Activated CD4-positive, alpha-beta T cell treated with anti-CD3 and anti-CD28 coated beads, Interleukin-2, amount 10 ng/mL, durations not matched to agents 24 days and 14 days (primary cell): ENCODE measurements at regions of chr5 and their contacts with region 1.

Region 1: GRCh38 chr5:140251527-140251973 is 51.4 kb downstream of the PFDN1 start:
- DNase-seq: peak; percentile 91
- H3K4me3 Mint-ChIP-seq: peak overlapping the region; percentile 65
- H3K27ac Mint-ChIP-seq: peak overlapping the region; percentile 88
- H3K4me1 Mint-ChIP-seq: peaks cover 46% of the 10 kb centered on the region
- H3K27me3 Mint-ChIP-seq: no peaks in the 10 kb centered on the region

Region 2: DNA sequence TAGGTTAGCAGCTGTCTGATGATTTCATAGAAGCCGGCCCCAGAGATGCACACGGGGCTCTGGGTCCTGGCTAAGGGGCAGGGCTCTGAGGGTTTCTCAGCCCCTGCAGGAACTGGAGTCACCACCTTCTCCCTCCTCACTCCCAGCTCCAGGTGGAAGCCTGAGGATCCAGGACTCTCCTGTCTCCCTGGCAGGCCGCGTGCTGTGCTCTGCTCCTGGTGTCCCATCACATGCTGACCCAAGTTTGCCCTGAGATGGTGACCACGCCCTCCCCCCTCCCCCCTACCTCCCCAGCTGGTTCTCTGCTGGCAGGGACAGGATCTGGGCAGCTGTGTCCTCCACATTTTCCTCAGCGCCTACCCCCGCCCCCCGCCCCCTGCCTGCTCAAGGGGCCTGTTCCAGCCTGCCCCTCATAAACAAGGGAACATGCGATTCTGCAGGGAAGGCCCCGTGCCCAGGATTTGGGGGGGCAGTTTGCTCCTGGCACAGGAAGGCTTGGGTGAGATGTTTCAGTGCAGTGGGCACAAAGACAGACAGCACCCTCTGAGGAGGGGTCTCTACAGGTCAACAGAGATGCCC is 368.5 kb before region 1 on chr5:
- intact Hi-C with region 1: no loop called
- DNase-seq: no peak
- H3K4me3 Mint-ChIP-seq: no peak overlapping the region
- H3K27ac Mint-ChIP-seq: no peak overlapping the region
- H3K4me1 Mint-ChIP-seq: no peaks in the 10 kb centered on the region
- H3K27me3 Mint-ChIP-seq: peaks cover 5% of the 10 kb centered on the region

Region 3: GRCh38 chr5:140261403-140262171 is 10.0 kb after region 1 on chr5:
- intact Hi-C with region 1: loop called (anchors 1 kb)
- DNase-seq: peak; percentile 73
- H3K4me3 Mint-ChIP-seq: no peak overlapping the region
- H3K27ac Mint-ChIP-seq: peak overlapping the region; percentile 70
- H3K4me1 Mint-ChIP-seq: peaks cover 61% of the 10 kb centered on the region
- H3K27me3 Mint-ChIP-seq: no peaks in the 10 kb centered on the region

Region 4: GRCh38 chr5:140267559-140268018 is 16.0 kb after region 1 on chr5:
- intact Hi-C with region 1: loop called (anchors 1 kb)
- DNase-seq: no peak
- H3K4me3 Mint-ChIP-seq: peak overlapping the region; percentile 63
- H3K27ac Mint-ChIP-seq: peak overlapping the region; percentile 26
- H3K4me1 Mint-ChIP-seq: peaks cover 36% of the 10 kb centered on the region
- H3K27me3 Mint-ChIP-seq: no peaks in the 10 kb centered on the region

Region 5: DNA sequence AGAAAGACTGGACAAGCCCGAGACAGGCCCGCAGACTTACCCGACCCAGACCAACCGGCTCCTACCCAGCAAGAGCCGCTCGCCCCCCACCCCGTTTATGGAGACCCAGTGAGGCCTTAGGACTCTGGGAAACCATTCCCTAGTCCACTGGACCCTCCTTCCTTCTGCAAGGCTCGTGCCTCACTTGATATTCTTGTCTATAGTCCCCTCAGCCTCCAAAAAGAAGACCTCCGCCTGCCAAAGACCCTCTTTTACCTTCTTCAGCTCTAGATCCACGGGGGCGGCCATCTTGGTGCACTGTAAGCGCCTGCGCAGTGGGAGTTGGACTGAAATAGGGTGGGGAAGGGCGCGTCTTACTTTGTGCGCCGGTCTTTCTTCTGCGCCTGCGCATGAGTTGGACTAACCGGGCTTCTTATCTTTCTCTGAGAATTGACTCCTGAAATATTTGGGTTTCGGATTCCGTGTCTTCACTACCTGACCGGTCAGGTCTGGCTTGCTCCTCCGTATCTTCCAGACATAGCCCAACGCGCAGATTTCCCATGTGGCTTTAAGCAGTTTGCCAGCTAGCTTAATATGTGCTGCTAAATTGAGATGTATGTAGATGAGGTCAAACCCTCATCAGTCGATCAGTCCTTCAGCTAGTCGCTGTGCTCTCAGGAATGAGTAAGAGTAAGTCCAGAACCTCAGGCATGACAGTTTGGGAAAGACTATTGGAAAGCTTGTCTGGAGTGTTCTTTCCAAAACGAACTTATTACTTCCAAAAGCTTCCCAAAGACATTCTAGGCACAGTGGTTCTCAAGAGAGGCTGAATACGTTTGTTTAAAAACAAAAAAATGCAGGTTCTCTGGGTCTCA is 51.5 kb after region 1 on chr5 and contains the start of gene PFDN1:
- intact Hi-C with region 1: loop called (anchors 1 kb)
- DNase-seq: peak; percentile 98
- H3K4me3 Mint-ChIP-seq: peak within 1 kb of the TSS; percentile 97
- H3K27ac Mint-ChIP-seq: peak within 1 kb of the TSS; percentile 95
- H3K4me1 Mint-ChIP-seq: peaks cover 15% of the 10 kb centered on the region
- H3K27me3 Mint-ChIP-seq: peaks cover 4% of the 10 kb centered on the region
- total RNA-seq, gene PFDN1: 51.5 and 57.9 TPM in 2 replicates

Region 6: GRCh38 chr5:140346348-140347101 is 95.0 kb after region 1 on chr5 and contains the start of gene HBEGF:
- intact Hi-C with region 1: loop called (anchors 1 kb)
- DNase-seq: peak; percentile 89
- H3K4me3 Mint-ChIP-seq: peak within 1 kb of the TSS; percentile 89
- H3K27ac Mint-ChIP-seq: peak within 1 kb of the TSS; percentile 78
- H3K4me1 Mint-ChIP-seq: peaks cover 61% of the 10 kb centered on the region
- H3K27me3 Mint-ChIP-seq: peaks cover 6% of the 10 kb centered on the region
- total RNA-seq, gene HBEGF: 21.9 and 22.5 TPM in 2 replicates

Region 7: GRCh38 chr5:140557136-140557805 is 305.7 kb after region 1 on chr5 and contains the start of gene SRA1:
- intact Hi-C with region 1: loop called (anchors 5 kb)
- DNase-seq: peak; percentile 98
- H3K4me3 Mint-ChIP-seq: peak within 1 kb of the TSS; percentile 84
- H3K27ac Mint-ChIP-seq: peak within 1 kb of the TSS; percentile 82
- H3K4me1 Mint-ChIP-seq: peaks cover 47% of the 10 kb centered on the region
- H3K27me3 Mint-ChIP-seq: no peaks in the 10 kb centered on the region
- total RNA-seq, gene SRA1: 53.8 and 54.9 TPM in 2 replicates